ENCODE measurements at regions of chr17 and their contacts with region 1.

Region 1: GRCh38 chr17:74873038-74873873 is 462 bp upstream of the FDXR start:
- H3K4me3 ChIP-seq: peak overlapping the region; percentile 83
- H3K27ac ChIP-seq: peak overlapping the region; percentile 62; the same call in 1 of the 2 replicates
- H3K4me1 ChIP-seq: peaks cover 10% of the 10 kb centered on the region
- CTCF ChIP-seq: no peak

Region 2: DNA sequence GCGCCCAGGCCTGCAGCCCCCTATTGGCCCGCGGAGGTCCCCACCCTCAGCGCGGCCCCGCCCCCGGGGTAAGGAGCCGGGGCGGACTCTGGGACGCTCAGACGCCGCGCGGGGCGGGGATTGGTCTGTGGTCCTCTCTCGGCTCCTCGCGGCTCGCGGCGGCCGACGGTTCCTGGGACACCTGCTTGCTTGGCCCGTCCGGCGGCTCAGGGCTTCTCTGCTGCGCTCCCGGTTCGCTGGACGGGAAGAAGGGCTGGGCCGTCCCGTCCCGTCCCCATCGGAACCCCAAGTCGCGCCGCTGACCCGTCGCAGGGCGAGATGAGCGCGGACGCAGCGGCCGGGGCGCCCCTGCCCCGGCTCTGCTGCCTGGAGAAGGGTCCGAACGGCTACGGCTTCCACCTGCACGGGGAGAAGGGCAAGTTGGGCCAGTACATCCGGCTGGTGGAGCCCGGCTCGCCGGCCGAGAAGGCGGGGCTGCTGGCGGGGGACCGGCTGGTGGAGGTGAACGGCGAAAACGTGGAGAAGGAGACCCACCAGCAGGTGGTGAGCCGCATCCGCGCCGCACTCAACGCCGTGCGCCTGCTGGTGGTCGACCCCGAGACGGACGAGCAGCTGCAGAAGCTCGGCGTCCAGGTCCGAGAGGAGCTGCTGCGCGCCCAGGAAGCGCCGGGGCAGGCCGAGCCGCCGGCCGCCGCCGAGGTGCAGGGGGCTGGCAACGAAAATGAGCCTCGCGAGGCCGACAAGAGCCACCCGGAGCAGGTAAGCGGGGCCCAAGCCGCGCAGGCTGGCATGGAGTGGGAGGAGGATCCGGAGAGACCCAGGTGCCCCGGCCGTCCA is 124.5 kb before region 1 on chr17 and contains the start of gene NHERF1:
- CTCF ChIA-PET with region 1: interaction called, 4 read pairs
- POLR2A ChIA-PET with region 1: interaction called, 12 read pairs
- H3K4me3 ChIP-seq: peak within 1 kb of the TSS; percentile 81
- H3K27ac ChIP-seq: peak within 1 kb of the TSS; percentile 68; the same call in 1 of the 2 replicates
- H3K4me1 ChIP-seq: peaks cover 7% of the 10 kb centered on the region
- CTCF ChIP-seq: peak; percentile 100

Region 3: DNA sequence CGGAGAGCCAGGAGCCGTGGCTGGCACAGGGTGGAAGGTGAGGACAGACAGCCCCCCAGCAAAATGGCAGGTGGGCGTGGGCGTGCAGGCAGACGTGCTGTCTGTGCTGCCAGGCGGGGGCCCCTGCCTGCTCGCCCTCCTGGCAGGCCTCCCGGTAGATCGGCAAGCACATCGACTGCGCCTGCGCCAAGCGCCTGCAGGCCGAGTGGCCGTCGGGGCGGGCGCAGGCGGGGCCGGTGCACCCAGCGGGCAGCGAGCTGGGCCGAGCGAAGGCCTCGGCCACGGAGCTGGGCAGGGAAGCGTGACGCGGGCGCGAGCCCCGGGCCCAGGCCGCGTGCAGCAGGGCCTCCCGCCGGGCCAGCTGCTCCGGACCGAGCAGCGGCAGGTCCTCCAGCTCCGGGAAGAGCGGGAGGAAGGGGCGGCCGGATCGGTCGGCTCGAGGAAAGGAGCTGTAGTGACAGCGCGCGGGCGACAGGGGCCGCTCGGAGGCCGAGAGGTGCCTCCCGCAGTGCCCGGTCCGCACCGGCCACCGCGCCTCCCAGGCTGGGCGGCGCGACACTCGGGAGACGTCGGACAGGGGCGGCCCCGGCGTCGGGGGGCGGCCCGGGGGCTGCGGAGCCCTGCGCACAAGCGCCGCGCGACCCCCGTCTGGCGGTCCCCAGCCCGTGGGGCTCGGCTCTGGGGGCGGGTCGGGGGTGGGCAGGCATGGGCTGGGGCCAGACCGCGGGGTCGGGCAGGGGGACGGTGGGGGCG is 30.5 kb before region 1 on chr17:
- CTCF ChIA-PET with region 1: interaction called, 239 read pairs
- POLR2A ChIA-PET with region 1: interaction called, 15 read pairs
- H3K4me3 ChIP-seq: peak overlapping the region; percentile 27
- H3K27ac ChIP-seq: peak overlapping the region; percentile 46; the same call in 1 of the 2 replicates
- H3K4me1 ChIP-seq: 0 out of 2 replicates have a peak, but pooled peaks cover 3% of the 10 kb centered on the region
- CTCF ChIP-seq: no peak

Region 4: DNA sequence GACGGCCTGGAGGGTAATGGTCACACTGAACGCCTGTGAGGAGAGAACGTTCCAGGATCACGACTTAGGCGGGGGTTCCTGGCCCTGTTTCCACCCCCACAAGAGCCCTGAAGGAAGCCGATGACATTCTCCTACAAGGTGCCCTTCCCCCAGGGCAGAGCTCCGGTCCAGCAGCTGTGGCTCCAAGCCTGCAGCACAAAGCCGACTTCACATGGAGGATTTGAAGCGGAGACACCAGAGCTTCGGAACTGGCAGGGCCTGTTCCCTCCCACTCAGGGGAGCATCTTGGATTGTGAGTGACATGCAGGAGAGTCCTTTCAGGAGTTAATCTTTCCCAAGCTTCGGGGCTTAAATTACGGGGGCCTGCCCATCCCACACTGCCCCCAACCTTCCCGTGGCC is 15.2 kb after region 1 on chr17:
- CTCF ChIA-PET with region 1: no interaction called
- POLR2A ChIA-PET with region 1: interaction called, 13 read pairs
- H3K4me3 ChIP-seq: no peak overlapping the region
- H3K27ac ChIP-seq: no peak overlapping the region
- H3K4me1 ChIP-seq: no peaks in the 10 kb centered on the region
- CTCF ChIP-seq: no peak

Region 5: DNA sequence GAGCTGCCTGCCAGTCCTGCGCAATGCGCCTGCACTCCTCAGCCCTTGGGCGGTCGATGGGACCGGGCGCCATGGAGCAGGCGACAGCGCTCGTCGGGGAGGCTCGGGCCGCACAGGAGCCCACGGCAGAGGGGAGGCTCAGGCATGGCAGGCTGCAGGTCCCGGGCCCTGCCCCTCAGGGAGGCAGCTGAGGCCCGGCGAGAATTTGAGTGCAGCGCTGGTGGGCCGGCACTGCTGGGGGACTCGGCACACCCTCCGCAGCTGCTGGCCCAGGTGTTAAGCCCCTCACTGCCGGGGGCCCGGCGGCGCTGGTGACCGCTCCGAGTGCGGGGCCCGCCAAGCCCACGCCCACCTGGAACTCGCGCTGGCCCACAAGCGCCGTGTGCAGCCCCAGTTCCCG is 33.8 kb after region 1 on chr17:
- CTCF ChIA-PET with region 1: no interaction called
- POLR2A ChIA-PET with region 1: interaction called, 11 read pairs
- H3K4me3 ChIP-seq: no peak overlapping the region
- H3K27ac ChIP-seq: no peak overlapping the region
- H3K4me1 ChIP-seq: no peaks in the 10 kb centered on the region
- CTCF ChIP-seq: no peak

Region 6: DNA sequence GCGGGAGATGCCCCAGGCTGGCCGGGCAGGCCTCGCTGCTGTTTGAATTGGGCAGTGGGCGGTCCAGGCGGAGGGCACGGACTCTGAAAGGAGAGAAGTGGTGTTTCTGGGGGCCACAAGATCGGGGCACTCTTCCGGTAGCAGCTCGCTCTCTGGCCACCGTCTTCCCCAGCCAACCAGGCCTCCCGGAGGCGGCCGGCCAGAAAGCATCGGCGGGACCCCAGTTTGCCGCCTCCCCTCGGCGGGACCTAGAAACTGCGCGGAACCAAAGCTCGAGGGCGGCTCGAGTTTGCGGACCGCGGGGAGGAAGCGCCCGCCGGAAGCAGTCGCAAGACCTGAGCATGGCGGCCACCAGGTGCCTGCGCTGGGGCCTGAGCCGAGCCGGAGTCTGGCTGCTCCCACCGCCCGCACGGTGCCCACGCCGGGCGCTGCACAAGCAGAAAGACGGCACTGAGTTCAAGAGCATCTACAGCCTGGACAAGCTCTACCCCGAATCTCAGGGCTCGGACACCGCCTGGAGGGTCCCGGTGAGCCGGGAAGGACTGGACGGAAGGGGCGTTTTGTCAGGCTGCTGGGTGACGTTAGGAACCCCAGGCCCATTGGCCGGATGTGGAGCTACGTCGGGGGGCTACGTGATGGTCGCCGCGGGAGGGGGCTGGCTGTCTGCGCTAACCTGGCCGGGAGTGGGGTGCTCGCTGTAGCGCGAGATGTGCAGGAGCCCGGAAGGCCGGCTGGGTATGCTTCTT is 139.3 kb after region 1 on chr17 and contains the start of gene MRPL58:
- CTCF ChIA-PET with region 1: no interaction called
- POLR2A ChIA-PET with region 1: interaction called, 13 read pairs
- H3K4me3 ChIP-seq: peak within 1 kb of the TSS; percentile 81
- H3K27ac ChIP-seq: peak within 1 kb of the TSS; percentile 83
- H3K4me1 ChIP-seq: peaks cover 26% of the 10 kb centered on the region
- CTCF ChIP-seq: peak; percentile 97